Gastrocnemius medialis (tissue), 4 donors: ENCODE measurements at regions of chr11 and their contacts with region 1.

Region 1: DNA sequence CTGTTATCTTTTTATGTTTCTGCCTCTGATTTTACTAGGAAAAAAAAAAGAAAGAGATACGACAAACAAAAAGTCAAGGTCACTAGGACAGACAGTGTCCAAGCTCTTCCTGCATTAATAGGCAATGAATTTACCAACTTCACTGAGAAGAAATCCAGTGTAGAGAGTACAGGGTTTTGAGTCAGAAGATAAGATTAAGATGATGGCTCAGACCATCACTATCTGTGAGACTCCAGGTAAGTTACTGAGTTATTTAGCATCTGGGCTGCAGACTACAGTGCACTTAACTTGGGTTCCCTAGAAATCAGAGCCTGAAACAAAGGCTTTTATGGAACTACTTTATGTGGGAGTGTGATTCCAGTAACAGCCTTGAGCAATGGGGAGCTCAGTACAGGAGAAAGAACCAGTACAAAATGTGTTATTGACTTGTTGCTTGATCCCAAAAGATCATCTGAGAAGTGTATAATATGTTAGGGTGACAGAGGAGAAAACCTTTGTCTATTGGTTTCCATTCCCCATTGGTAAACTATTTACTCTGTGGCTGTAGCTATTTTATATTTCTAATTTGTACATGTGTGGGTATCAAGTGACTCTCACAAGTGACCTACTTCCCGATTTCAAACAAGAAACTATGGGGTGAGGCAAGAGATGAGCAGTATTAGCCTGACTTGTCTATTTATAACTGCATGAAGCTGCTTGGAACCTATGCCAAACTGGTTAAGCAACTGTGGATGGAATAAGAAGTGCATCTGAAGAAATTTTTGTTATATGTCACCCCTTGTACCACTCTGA is 395.8 kb downstream of the RAB38 start:
- DNase-seq: peak; percentile 14 to 31
- ATAC-seq: peak; percentile 99
- H3K4me3 ChIP-seq: no peak overlapping the region
- H3K27ac ChIP-seq: peak overlapping the region; percentile 59 to 86 (median 72)
- H3K4me1 ChIP-seq: peaks cover 9 to 15% of the 10 kb centered on the region in 2 donors
- H3K27me3 ChIP-seq: no peaks in the 10 kb centered on the region
- CTCF ChIP-seq: no peak
- POLR2A ChIP-seq: no peak

Region 2: GRCh38 chr11:87819151-87819550 is 39.7 kb after region 1 on chr11:
- in situ Hi-C with region 1: no loop called
- intact Hi-C with region 1: no loop called
- DNase-seq: no peak
- ATAC-seq: no peak
- H3K4me3 ChIP-seq: no peak overlapping the region
- H3K27ac ChIP-seq: no peak overlapping the region
- H3K4me1 ChIP-seq: peaks cover 0 to 4% of the 10 kb centered on the region in 2 donors
- H3K27me3 ChIP-seq: no peaks in the 10 kb centered on the region
- CTCF ChIP-seq: no peak
- POLR2A ChIP-seq: no peak

Region 3: DNA sequence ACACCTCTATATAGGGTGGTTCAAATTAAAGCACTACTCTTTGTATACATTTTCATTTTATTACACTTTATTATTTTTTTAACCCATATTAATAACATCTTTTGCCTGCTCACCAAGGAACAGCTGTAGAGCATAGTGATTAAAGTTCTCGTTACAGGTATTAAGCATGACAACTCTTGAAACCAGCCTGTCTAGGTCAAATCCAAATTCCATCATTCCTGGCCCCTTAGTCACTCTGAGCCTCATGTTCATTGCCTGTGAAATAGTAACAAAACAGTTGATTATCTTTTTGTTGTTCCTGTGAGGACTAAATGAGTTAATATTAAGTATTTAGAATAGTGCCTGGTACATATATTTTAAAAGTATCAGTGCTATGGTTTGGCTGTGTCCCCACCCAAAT is 61.3 kb after region 1 on chr11:
- in situ Hi-C with region 1: no loop called
- intact Hi-C with region 1: loop called (anchors 2 kb)
- DNase-seq: no peak
- ATAC-seq: no peak
- H3K4me3 ChIP-seq: no peak overlapping the region
- H3K27ac ChIP-seq: no peak overlapping the region
- H3K4me1 ChIP-seq: no peaks in the 10 kb centered on the region
- H3K27me3 ChIP-seq: no peaks in the 10 kb centered on the region
- CTCF ChIP-seq: no peak
- POLR2A ChIP-seq: no peak

Region 4: GRCh38 chr11:87926250-87926970 is 146.9 kb after region 1 on chr11:
- in situ Hi-C with region 1: no loop called
- intact Hi-C with region 1: no loop called
- DNase-seq: no peak
- ATAC-seq: peak in 1 of 2 donors; percentile 50
- H3K4me3 ChIP-seq: no peak overlapping the region
- H3K27ac ChIP-seq: no peak overlapping the region
- H3K4me1 ChIP-seq: no peaks in the 10 kb centered on the region
- H3K27me3 ChIP-seq: no peaks in the 10 kb centered on the region
- CTCF ChIP-seq: no peak
- POLR2A ChIP-seq: no peak